GM13977 (cell line): ENCODE measurements at regions of chr19 and their contacts with region 1.

Region 1: DNA sequence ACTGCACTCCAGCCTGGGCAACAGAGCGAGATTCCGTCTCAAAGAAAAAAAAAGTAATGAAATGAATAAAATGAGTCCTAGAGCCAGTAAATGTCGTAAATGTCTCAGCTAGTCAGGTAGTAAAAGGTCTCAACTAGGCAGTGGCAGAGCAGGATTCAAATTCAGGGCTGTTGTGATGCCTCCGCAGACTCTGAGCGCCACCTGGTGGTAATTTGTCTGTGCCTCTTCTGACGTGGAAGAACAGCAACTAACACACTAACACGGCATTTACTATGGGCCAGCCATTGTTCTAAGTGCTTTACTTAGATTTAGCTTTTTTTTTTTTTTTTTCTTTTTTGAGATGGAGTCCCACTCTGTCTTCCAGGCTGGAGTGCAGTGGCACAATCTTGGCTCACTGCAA is 30.2 kb downstream of the CYP2F1 start:
- DNase-seq: peak; percentile 66
- CTCF ChIP-seq: peak; percentile 86

Region 2: GRCh38 chr19:40662921-40663694 is 481.3 kb before region 1 on chr19:
- in situ Hi-C with region 1: loop called (anchors 25 kb)
- DNase-seq: peak; percentile 94
- CTCF ChIP-seq: no peak

Region 3: GRCh38 chr19:40974633-40975037 is 169.8 kb before region 1 on chr19:
- in situ Hi-C with region 1: loop called (anchors 10 kb)
- DNase-seq: peak; percentile 74
- CTCF ChIP-seq: peak; percentile 88